Activated B cell treated with CpG ODN at 0.5 μM for 24 hours (primary cell): ENCODE measurements at regions of chr11 and their contacts with region 1.

Region 1: DNA sequence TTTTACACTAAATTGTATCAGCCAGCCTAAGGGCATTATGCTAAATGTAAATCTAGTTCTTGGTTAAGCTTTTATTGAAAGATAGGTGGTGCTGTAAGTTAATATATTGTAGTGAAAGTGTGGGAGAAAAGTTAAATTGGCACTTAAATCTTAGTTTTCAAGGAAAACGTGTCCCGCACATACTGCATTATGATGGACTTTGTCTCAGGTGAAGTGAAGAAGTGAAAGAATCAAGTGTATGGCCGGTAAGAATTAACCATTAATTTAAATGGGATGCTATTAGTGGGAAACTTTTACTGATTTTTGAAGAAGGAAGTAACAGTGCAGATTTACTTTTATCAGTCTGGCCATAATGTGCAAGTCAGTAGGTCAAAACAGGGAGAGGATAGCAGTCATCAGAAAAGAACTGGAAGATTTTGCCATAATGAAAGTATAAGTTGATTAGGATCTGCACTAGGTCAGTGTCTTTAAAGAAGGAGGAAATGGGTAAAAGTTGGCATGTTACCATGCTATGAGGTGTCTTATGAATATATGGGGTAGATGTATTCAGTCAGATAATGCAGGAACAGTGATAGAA is 81.6 kb downstream of the PDHX start:
- DNase-seq: no peak
- ATAC-seq: peak; percentile 64
- H3K4me3 Mint-ChIP-seq: peak overlapping the region; percentile 52
- H3K27ac Mint-ChIP-seq: peak overlapping the region; percentile 77
- H3K4me1 Mint-ChIP-seq: peaks cover 31% of the 10 kb centered on the region
- H3K27me3 Mint-ChIP-seq: no peaks in the 10 kb centered on the region
- CTCF ChIP-seq: peak; percentile 58

Region 2: GRCh38 chr11:35030716-35031213 is 32.7 kb after region 1 on chr11:
- CTCF ChIA-PET with region 1: interaction called, 8 read pairs
- POLR2A ChIA-PET with region 1: interaction called, 12 read pairs
- intact Hi-C with region 1: no loop called
- DNase-seq: no peak
- ATAC-seq: peak; percentile 58
- H3K4me3 Mint-ChIP-seq: peak overlapping the region; percentile 79
- H3K27ac Mint-ChIP-seq: peak overlapping the region; percentile 96
- H3K4me1 Mint-ChIP-seq: peaks cover 75% of the 10 kb centered on the region
- H3K27me3 Mint-ChIP-seq: no peaks in the 10 kb centered on the region
- CTCF ChIP-seq: no peak

Region 3: GRCh38 chr11:35138943-35139721 is 141.1 kb after region 1 on chr11 and contains the start of gene CD44:
- CTCF ChIA-PET with region 1: interaction called, 18 read pairs
- POLR2A ChIA-PET with region 1: interaction called, 54 read pairs
- intact Hi-C with region 1: loop called (anchors 1 kb)
- DNase-seq: peak; percentile 68
- ATAC-seq: peak; percentile 79
- H3K4me3 Mint-ChIP-seq: peak within 1 kb of the TSS; percentile 97
- H3K27ac Mint-ChIP-seq: peak within 1 kb of the TSS; percentile 98
- H3K4me1 Mint-ChIP-seq: peaks cover 57% of the 10 kb centered on the region
- H3K27me3 Mint-ChIP-seq: no peaks in the 10 kb centered on the region
- CTCF ChIP-seq: no peak
- total RNA-seq, gene CD44: 1,441 and 1,546 TPM in 2 replicates

Region 4: DNA sequence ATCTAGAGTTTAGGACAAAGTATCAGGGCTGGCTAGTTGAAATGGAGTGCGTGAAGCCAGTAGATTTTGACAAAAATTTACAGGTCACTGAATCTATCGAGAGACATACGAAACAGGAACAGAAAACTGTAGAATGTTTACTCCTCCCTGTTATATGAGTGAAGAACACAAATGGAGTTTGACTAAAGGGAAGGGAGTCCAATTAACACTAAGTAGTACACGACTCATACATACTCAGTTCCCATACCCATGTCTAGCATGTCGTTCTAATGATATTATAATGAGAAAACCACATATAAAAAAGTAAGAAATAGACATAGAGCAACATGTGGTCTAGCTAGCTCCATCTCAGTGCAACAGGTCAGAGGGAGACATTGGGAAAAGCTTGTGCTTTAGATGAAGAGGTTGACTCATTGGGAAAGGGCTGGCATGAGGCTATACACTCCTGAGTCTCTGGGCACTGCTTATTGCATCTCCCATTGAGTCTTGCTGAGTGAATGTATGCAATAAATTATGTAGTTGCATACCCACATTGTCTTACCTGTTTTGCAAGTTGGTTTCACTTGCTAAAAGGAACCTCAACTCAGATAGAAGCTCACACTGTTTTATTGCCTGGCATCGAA is 184.4 kb after region 1 on chr11:
- CTCF ChIA-PET with region 1: interaction called, 13 read pairs
- POLR2A ChIA-PET with region 1: no interaction called
- intact Hi-C with region 1: loop called (anchors 2 kb)
- DNase-seq: no peak
- ATAC-seq: peak; percentile 68
- H3K4me3 Mint-ChIP-seq: peak overlapping the region; percentile 68
- H3K27ac Mint-ChIP-seq: peak overlapping the region; percentile 80
- H3K4me1 Mint-ChIP-seq: peaks cover 79% of the 10 kb centered on the region
- H3K27me3 Mint-ChIP-seq: no peaks in the 10 kb centered on the region
- CTCF ChIP-seq: no peak

Region 5: GRCh38 chr11:35391922-35392813 is 394.1 kb after region 1 on chr11:
- CTCF ChIA-PET with region 1: interaction called, 10 read pairs
- POLR2A ChIA-PET with region 1: no interaction called
- intact Hi-C with region 1: loop called (anchors 1 kb)
- DNase-seq: peak; percentile 79
- ATAC-seq: peak; percentile 75
- H3K4me3 Mint-ChIP-seq: peak overlapping the region; percentile 47
- H3K27ac Mint-ChIP-seq: no peak overlapping the region
- H3K4me1 Mint-ChIP-seq: peaks cover 25% of the 10 kb centered on the region
- H3K27me3 Mint-ChIP-seq: peaks cover 5% of the 10 kb centered on the region
- CTCF ChIP-seq: peak; percentile 84